ENCODE measurements at regions of chr16 and their contacts with region 1.

Region 1: GRCh38 chr16:3029537-3030402 is 5.9 kb downstream of the THOC6 start:
- DNase-seq: no peak
- H3K4me3 ChIP-seq: no peak overlapping the region
- H3K4me3 Mint-ChIP-seq: peak overlapping the region; percentile 28 to 85 (median 67)
- H3K27ac ChIP-seq: no peak overlapping the region
- H3K27ac Mint-ChIP-seq: peak overlapping the region in 2 of 8 donors; percentile 59 to 82
- H3K4me1 ChIP-seq: peaks cover 20% of the 10 kb centered on the region
- H3K4me1 Mint-ChIP-seq: peaks cover 12 to 38% (median 21%) of the 10 kb centered on the region in 3 donors
- H3K27me3 ChIP-seq: peaks cover 18% of the 10 kb centered on the region
- H3K27me3 Mint-ChIP-seq: peaks cover 28 to 31% of the 10 kb centered on the region in 2 donors

Region 2: DNA sequence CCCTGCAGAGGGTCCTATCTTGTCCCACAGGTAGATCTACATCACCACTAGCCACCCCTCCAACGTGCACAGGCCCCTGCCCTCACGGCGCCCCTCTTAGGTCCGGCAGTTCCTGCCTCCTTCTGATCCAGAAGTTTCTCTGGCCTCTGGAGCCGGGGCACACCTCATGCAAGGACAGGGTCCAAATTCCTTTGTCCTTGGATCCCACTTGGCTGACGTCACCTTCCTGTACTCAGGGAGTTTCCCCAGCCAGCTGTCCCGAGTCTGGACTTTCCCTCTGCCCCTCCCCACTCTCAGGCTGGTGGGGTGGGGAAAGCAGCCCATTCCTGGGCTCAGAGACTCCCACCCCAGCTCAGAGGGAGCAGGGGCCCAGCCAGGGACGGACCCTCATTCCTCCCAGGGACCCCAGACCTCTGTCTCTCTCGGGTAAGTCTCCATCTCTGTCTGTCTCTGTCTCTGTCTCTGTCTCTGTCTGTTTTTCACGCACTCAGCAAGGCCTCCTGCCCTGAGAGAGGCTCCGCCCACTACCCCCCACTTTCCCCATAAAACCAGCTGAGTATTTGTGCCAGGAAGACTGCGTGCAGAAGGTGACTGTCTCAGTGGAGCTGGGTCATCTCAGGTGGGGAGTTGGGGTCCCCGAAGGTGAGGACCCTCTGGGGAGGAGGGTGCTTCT is 35.4 kb after region 1 on chr16 and contains the start of gene IL32:
- CTCF ChIA-PET with region 1: interaction called, 12 read pairs
- POLR2A ChIA-PET with region 1: interaction called, 5 read pairs
- DNase-seq: peak; percentile 44 to 74 (median 65)
- H3K4me3 ChIP-seq: peak within 1 kb of the TSS; percentile 92
- H3K4me3 Mint-ChIP-seq: peak within 1 kb of the TSS; percentile 98 to 100 (median 100)
- H3K27ac ChIP-seq: peak within 1 kb of the TSS; percentile 81
- H3K27ac Mint-ChIP-seq: peak within 1 kb of the TSS; percentile 88 to 99 (median 96)
- H3K4me1 ChIP-seq: peaks cover 54% of the 10 kb centered on the region
- H3K4me1 Mint-ChIP-seq: peaks cover 49 to 74% (median 68%) of the 10 kb centered on the region in 3 donors
- H3K27me3 ChIP-seq: no peaks in the 10 kb centered on the region
- H3K27me3 Mint-ChIP-seq: no peaks in the 10 kb centered on the region
- total RNA-seq, gene IL32: 975 to 992 TPM

Region 3: DNA sequence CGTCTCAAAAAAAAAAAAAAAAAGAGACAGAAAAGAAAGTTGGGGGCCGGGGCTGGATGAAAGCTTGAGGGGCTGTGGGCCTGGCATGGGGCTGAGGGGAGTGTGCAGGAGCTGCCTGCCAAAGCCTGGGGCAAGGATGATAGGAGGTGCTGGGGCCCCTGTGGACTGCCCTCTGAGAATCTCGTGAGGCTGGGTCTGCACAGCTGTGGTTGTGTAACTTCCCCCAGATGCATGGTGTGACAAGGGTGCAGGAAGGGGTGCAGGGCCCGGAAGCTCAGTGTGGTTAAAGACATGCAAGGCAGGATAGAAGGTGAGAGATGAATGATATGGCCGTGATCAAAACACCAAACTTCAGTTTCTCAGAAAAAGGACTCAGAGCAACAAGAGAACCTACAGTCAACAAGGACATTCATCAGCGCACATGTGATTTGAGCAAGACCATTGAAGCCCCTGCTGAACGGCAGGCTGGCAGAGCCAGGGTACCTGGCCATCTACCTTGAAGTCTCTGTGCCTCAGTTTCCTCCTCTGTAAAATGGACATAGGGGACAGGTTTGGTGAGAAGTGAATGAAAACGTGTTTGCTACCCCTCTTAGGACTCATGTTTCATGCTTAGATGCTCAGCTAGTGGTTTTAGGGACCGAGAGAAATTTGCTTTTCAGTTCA is 45.2 kb after region 1 on chr16:
- CTCF ChIA-PET with region 1: interaction called, 24 read pairs
- POLR2A ChIA-PET with region 1: interaction called, 4 read pairs
- DNase-seq: peak; percentile 68 to 94 (median 90)
- H3K4me3 ChIP-seq: peak overlapping the region; percentile 19
- H3K4me3 Mint-ChIP-seq: peak overlapping the region; percentile 58 to 91 (median 79)
- H3K27ac ChIP-seq: peak overlapping the region; percentile 45
- H3K27ac Mint-ChIP-seq: peak overlapping the region; percentile 88 to 97 (median 95)
- H3K4me1 ChIP-seq: peaks cover 94% of the 10 kb centered on the region
- H3K4me1 Mint-ChIP-seq: peaks cover 89 to 97% (median 94%) of the 10 kb centered on the region in 3 donors
- H3K27me3 ChIP-seq: no peaks in the 10 kb centered on the region
- H3K27me3 Mint-ChIP-seq: no peaks in the 10 kb centered on the region

Region 4: DNA sequence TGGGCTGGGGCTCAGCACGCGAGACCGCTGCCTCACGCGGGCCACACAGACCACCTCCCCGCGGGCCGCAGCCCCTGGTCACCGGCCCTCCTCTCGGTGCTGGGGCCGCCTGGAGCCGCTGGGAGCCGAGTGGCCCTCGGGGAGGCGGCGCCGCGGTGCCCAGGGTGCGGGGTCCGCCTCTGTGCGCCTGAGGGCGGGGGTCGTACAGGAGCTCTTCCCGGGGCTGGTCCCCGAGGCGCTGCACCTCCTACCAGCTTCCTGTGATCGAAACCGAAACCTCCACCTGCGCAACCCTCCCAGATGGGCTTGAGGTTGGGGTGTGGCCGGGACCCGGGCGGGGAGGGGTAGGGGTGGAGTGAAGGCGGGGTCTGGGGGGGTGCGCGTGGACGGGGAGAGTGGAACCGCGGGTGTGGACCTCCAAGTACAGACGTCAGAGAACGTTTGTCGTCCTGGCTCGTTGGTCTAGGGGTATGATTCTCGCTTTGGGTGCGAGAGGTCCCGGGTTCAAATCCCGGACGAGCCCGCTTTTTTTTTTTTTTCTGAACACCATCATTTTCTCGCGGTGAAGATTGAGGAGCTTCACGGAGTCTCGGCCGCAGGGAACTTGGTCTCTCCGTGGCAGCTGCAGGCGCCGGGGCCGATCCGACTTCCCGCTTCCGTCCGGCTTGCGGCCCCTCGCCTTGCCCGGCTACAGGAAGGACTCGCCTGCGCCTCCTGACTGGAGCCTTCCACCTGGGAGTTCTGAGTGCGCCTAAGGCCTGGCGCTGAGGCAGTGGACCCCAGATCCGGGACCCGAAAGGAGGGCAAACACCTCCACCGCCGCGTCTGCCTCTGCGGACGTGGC is 128.9 kb after region 1 on chr16:
- CTCF ChIA-PET with region 1: interaction called, 17 read pairs
- POLR2A ChIA-PET with region 1: interaction called, 5 read pairs
- DNase-seq: peak; percentile 92 to 97 (median 93)
- H3K4me3 ChIP-seq: peak overlapping the region; percentile 87
- H3K4me3 Mint-ChIP-seq: peak overlapping the region; percentile 86 to 96 (median 91)
- H3K27ac ChIP-seq: peak overlapping the region; percentile 82
- H3K27ac Mint-ChIP-seq: peak overlapping the region; percentile 89 to 99 (median 96)
- H3K4me1 ChIP-seq: peaks cover 24% of the 10 kb centered on the region
- H3K4me1 Mint-ChIP-seq: peaks cover 21 to 32% (median 25%) of the 10 kb centered on the region in 3 donors
- H3K27me3 ChIP-seq: no peaks in the 10 kb centered on the region
- H3K27me3 Mint-ChIP-seq: peaks cover 0 to 16% of the 10 kb centered on the region in 2 donors

Region 5: GRCh38 chr16:3348547-3349167 is 318.9 kb after region 1 on chr16:
- CTCF ChIA-PET with region 1: no interaction called
- POLR2A ChIA-PET with region 1: no interaction called
- DNase-seq: no peak
- H3K4me3 ChIP-seq: no peak overlapping the region
- H3K4me3 Mint-ChIP-seq: no peak overlapping the region
- H3K27ac ChIP-seq: no peak overlapping the region
- H3K27ac Mint-ChIP-seq: no peak overlapping the region
- H3K4me1 ChIP-seq: no peaks in the 10 kb centered on the region
- H3K4me1 Mint-ChIP-seq: peaks cover under 1 to 2% (median 2%) of the 10 kb centered on the region in 3 donors
- H3K27me3 ChIP-seq: no peaks in the 10 kb centered on the region
- H3K27me3 Mint-ChIP-seq: peaks cover 0 to 3% of the 10 kb centered on the region in 2 donors